ENCODE measurements at regions of chr4 and their contacts with region 1.

Region 1: DNA sequence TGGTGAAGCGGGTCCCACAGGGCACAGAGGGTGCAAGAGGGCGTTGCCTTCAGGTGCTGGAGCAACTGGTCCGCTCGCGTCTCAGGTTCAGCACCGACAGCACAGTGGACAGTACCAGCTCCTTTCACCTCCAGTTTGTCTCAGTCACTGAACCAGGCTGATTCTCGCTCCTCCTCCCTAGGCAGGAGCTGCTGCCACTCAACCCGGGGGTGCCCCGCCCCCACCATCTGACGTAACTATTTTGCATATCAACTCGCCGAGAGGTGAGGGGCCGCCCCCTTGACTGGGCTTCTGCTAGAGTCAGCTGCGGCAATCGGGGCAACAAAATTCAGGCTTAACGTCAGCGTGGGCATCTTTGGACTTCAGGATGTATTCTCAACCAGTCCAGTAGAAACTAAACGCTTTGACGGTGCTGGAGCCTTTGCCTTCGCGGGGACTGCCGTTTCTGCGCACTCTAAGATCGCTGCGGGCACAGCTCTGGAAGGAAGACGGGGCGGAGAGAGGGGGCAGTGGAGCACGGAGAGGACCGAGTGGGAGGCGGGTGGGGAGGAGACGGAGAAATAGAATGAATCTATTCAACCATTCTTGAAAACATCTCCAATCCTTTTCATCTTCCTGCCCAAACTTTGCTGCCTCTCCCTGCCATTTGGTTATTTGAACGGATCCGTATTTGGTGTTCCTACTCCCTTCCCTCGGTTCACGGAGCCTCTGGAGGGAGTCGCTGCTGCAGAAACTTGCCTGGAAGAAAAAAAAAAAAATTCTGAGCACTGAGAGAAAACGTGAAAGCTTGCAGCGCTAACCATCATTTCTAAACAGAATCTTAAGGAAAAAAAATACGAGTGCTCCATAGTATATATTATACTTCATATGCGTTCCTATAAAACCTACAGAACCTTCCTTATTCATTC is at the start of gene FSTL5:
- DNase-seq: peak; percentile 48
- ATAC-seq: peak; percentile 57 to 79
- total RNA-seq, gene FSTL5: not detected

Region 2: DNA sequence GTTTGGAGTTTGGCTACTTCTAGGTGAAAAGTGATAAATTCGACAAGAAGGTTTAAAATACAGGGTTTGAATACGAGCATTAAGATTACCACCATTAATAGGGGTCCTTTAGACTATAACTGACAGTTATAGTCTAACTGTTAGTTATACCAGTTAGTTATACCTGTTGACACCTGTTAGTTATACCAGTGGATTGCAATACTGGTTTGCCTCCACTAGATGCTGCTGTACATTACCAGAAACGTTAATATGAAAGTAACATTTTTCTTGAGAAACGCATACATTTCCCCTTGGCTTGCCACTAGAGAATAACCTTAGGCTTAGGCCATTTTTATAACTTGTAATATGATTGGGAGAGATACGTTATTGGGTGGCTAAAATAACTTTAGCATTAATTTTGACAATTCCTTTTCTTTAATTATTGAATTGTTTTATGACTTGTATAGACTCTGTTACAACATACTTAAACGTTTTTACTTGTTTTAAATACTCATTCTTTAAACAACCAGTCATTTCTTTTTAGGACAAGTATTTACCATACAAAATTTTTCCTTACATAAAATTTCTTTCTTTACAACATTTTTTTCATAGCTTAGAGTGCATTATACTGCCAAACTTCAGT is 911.5 kb before region 1 on chr4:
- intact Hi-C with region 1: loop called in 1 of 2 experiments (anchors 10 kb)
- DNase-seq: no peak
- ATAC-seq: no peak

Measured in left cardiac atrium (tissue), 4 donors.